Activated CD4-positive, alpha-beta memory T cell treated with anti-CD3 and anti-CD28 coated beads for 36 hours (primary cell): ENCODE measurements at regions of chr2 and their contacts with region 1.

Region 1: DNA sequence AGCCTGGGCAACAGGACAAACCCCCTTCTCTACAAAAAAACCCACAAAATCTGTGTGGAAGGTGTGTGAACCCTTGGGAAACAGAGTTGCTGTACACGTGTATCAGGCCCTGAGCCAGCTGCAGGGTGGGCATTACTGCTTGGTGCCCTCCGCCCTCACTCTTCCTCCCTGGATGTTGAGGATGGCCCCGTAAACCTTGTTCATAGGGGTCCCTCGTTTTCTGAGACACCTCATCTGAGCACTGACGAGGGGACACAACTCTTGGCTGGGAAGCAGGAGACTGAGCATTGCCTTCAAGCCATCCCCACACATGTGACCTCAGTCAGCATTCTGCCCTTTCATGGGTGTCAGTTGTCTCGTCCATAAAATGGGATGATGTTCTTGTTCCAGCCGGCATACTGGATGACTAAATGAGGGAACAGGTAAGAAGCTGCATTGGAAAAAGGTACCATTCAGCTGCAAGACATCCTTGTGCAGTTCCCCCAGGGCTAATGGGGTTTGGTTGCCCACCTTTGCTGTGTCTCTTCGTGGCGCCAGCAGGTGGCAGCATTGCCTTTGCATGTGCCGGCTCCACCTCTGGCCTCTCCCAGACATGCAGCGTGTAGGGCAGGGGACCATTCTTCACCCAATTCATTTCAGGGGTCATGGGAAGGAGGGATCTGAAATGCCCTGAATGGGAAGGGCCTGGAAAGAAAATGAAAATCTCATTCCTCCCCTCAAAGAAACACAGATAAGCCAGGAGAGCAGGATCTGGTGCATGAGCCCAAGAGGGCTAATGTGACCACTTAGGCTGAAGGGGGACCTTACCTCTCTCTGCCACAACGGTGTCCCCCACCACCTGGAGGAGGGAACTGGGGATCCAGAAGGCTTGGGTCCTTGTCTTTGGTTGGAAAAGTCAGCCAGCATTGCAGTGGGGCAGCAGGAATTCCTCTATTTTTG is 36.4 kb upstream of the HAAO start:
- DNase-seq: peak; percentile 78
- H3K4me3 Mint-ChIP-seq: no peak overlapping the region
- H3K27ac Mint-ChIP-seq: no peak overlapping the region
- H3K4me1 Mint-ChIP-seq: peaks cover 14% of the 10 kb centered on the region
- H3K27me3 Mint-ChIP-seq: peaks cover 2% of the 10 kb centered on the region

Region 2: GRCh38 chr2:42810121-42810970 is 18.4 kb before region 1 on chr2:
- CTCF ChIA-PET with region 1: interaction called, 43 read pairs
- POLR2A ChIA-PET with region 1: interaction called, 7 read pairs
- intact Hi-C with region 1: no loop called
- DNase-seq: peak; percentile 97
- H3K4me3 Mint-ChIP-seq: peak overlapping the region; percentile 95
- H3K27ac Mint-ChIP-seq: peak overlapping the region; percentile 100
- H3K4me1 Mint-ChIP-seq: peaks cover 12% of the 10 kb centered on the region
- H3K27me3 Mint-ChIP-seq: peaks cover 4% of the 10 kb centered on the region

Region 3: DNA sequence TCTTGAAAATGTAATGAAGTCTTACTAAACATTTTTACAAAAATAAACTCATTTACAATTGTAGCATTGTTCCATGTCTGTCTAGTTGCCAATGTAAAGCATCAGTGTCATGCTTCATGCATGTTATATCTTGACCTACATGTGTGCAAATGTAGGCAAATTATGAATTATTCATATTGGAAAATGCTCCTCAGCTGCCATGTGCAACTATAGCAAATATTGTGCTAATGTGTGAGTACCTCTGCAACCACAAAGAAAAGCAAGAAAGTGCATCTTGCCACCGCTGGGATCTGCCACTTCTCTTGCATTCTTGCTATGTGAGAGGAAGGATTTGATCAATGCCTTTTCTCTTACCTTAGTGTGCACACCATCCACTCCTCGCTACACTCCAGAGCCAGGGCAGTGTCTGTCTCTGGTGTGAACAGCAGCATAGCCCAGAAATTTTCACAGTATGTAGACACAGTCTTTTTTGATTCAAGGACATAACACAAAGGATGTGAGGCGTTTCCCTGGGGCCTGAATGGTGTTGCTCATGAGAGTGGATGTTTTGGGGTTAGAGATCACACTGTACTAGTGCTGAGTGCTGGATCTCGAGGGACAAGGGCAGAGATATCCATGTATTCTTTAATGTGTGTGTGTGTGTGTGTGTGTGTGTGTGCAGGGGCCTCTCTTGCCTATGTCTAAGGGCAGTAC is 11.2 kb after region 1 on chr2:
- CTCF ChIA-PET with region 1: interaction called, 12 read pairs
- POLR2A ChIA-PET with region 1: no interaction called
- intact Hi-C with region 1: no loop called
- DNase-seq: no peak
- H3K4me3 Mint-ChIP-seq: no peak overlapping the region
- H3K27ac Mint-ChIP-seq: no peak overlapping the region
- H3K4me1 Mint-ChIP-seq: no peaks in the 10 kb centered on the region
- H3K27me3 Mint-ChIP-seq: no peaks in the 10 kb centered on the region

Region 4: GRCh38 chr2:42967959-42968674 is 139.4 kb after region 1 on chr2:
- CTCF ChIA-PET with region 1: no interaction called
- POLR2A ChIA-PET with region 1: no interaction called
- intact Hi-C with region 1: no loop called
- DNase-seq: no peak
- H3K4me3 Mint-ChIP-seq: no peak overlapping the region
- H3K27ac Mint-ChIP-seq: no peak overlapping the region
- H3K4me1 Mint-ChIP-seq: peaks cover 8% of the 10 kb centered on the region
- H3K27me3 Mint-ChIP-seq: no peaks in the 10 kb centered on the region

Region 5: DNA sequence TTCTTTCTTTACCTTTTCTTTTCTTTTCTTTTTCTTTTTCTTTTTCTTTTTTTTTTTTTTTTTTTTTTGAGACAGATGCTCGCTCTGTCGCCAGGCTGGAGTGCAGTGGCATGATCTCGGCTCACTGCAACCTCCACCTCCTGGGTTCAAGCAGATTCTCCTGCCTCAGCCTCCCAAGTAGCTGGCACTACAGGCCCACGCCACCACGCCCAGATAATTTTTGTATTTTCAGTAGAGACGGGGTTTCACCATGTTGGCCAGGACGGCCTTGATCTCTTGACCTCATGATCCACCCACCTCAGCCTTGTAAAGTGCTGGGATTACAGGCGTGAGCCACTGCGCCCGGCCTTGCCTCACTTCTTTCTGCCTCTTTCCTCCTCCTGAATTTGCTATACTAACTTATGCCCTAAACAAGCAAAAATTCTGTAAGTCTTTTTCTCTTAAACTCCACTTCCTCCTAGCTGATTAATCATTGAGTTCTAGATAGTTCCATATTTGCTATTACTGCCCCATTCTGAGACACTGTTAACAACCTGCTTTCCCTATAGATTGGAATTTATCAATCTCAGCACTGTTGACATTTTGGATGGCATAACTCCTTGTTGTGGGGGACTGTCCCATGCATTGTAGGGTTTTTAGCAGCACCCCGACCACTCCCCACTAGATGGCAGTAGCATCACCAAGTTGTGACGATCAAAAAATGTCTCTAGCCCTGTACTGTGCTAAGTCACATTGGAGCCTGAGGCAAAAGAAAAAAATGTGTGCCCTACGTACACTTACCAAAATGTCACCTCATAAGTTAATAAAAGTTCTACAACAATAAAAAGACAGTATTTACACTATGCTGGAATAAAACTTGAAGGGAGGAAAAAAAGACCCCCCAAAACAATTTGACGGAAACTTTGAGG is 783.5 kb after region 1 on chr2:
- CTCF ChIA-PET with region 1: interaction called, 3 read pairs
- POLR2A ChIA-PET with region 1: no interaction called
- intact Hi-C with region 1: loop called (anchors 2 kb)
- DNase-seq: peak; percentile 83
- H3K4me3 Mint-ChIP-seq: no peak overlapping the region
- H3K27ac Mint-ChIP-seq: no peak overlapping the region
- H3K4me1 Mint-ChIP-seq: no peaks in the 10 kb centered on the region
- H3K27me3 Mint-ChIP-seq: peaks cover 2% of the 10 kb centered on the region